ENCODE measurements at regions of chr12 and their contacts with region 1.

Region 1: DNA sequence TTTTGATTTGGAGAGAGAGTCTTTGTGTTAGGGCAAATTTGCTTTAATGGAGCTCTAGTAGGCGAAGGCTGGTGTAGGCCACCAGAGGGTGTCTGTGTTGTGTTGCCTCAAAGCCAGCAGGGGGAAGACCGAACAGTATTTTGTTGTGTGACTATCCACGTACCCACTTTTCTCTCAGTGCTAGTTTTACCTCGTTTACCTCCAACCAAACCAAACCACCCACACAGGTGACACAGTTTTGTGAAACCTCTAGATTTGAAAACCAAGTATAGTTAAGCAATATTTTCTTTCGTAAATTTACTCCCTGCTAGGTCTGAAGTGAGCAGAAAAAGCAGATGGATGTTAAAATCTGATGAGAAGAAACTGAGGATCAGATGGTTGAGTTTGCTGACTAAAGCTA is 36.3 kb upstream of the NPFF start:
- DNase-seq: peak; percentile 18 to 63
- ATAC-seq: peak; percentile 78 to 93 (median 92)
- H3K4me3 ChIP-seq: no peak overlapping the region
- H3K27ac ChIP-seq: peak overlapping the region in 7 of 10 donors; percentile 2 to 64 (median 49)
- H3K4me1 ChIP-seq: peaks cover 0 to 23% (median 16%) of the 10 kb centered on the region in 9 donors
- H3K27me3 ChIP-seq: no peaks in the 10 kb centered on the region
- CTCF ChIP-seq: peak; percentile 69 to 94 (median 84)

Region 2: GRCh38 chr12:53596920-53597363 is 53.4 kb after region 1 on chr12:
- intact Hi-C with region 1: loop called in 3 of 10 experiments (anchors 10 kb)
- DNase-seq: no peak
- ATAC-seq: peak; percentile 76 to 94 (median 89)
- H3K4me3 ChIP-seq: peak overlapping the region in 1 of 10 donors; percentile 5
- H3K27ac ChIP-seq: peak overlapping the region; percentile 19 to 81 (median 72)
- H3K4me1 ChIP-seq: peaks cover 14 to 90% (median 71%) of the 10 kb centered on the region in 9 donors
- H3K27me3 ChIP-seq: no peaks in the 10 kb centered on the region
- CTCF ChIP-seq: no peak

Region 3: DNA sequence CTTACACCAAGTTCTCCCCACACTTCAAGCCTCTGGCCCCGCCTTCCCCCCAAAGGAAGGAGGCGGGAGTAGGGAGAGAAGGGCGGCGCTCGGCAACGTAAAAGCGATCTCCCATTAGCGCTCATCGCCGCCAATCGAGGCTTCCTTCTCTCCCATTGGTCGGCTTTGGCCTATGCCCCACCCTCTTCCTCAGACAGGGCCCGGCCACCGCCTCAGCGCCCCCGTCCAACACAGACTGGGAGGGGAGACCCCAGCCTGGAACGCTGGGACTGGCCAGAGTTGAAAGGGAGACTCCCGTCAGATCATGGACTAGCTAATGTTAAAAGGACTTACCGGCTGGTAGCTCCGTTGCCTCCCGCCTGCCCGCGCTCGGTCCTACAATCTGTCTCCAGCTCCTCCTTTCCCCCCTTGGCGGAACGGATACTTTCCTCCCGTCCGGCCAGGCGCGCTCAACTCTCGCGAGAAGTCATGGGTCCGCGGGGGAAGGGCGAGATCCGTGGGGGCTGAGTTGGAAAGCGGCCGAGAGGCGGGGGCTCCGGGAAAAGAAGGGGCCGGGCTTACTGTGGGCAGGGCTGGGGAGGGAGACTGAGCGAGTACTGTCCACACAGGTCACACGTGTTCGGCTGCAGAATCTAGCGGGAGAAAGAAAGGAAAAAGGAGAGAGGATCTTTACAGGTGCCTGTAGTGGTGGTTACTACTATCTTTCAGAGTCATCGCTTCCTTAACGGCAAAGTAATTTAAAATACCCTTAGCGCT is 82.6 kb after region 1 on chr12 and contains the start of gene ATF7:
- intact Hi-C with region 1: loop called in 5 of 10 experiments (anchors 2 to 10 kb)
- DNase-seq: peak; percentile 98 to 99
- ATAC-seq: peak; percentile 97 to 99 (median 98)
- H3K4me3 ChIP-seq: peak within 1 kb of the TSS; percentile 57 to 74 (median 69)
- H3K27ac ChIP-seq: peak within 1 kb of the TSS; percentile 79 to 98 (median 96)
- H3K4me1 ChIP-seq: peaks cover 5 to 42% (median 36%) of the 10 kb centered on the region in 9 donors
- H3K27me3 ChIP-seq: no peaks in the 10 kb centered on the region
- CTCF ChIP-seq: peak in 2 of 9 donors; percentile 7 to 14
- total RNA-seq, gene ATF7: 28.2 to 47.8 (median 34.4) TPM

Region 4: DNA sequence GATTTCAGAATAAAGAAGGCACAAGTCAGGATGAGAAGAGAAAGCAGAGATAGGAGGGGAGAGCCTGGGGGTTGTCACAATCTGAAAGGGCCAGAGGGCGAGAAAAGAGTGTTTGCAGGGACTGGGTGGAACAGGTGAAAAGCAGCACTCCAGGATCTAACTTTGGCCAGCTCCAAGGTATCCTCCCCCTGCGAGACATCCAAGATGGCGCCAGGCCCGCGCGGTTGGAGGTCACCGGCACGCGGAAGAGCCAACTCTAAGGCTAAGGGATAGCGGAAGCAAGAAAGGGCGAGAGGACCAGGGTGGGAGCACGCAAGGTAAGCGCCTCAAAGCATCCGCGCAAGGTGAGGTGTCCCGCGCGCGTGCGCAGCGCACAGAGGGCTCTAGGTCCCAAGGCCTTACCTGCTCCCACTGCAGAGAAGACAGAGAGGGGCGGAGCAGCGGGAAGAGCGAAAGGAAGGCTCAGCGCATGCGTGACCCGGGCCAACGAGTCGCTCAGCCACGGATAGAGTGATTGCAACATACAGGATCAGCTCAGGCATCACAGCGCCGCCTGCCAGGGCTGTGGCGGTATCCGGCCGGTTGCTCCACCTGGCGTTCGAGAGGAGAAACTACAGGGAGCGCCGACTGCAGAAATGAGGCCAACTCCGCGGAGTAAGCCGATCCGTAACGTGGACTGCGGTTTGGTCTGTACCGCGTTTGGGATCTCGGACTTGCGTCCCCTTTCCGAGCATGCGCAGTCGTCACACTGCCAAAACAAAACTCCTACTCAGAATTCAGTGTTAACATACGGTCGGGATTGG is 132.3 kb after region 1 on chr12 and contains the start of gene ATP5MC2:
- intact Hi-C with region 1: loop called in 9 of 10 experiments (anchors 1 to 5 kb)
- DNase-seq: peak; percentile 96 to 97
- ATAC-seq: peak; percentile 95 to 98 (median 97)
- H3K4me3 ChIP-seq: peak within 1 kb of the TSS; percentile 48 to 98 (median 72)
- H3K27ac ChIP-seq: peak within 1 kb of the TSS; percentile 87 to 98 (median 90)
- H3K4me1 ChIP-seq: peaks cover 3 to 51% (median 34%) of the 10 kb centered on the region in 9 donors
- H3K27me3 ChIP-seq: peaks cover 0 to 12% (median 0%) of the 10 kb centered on the region in 7 donors
- CTCF ChIP-seq: peak; percentile 96 to 100 (median 99)
- total RNA-seq, gene ATP5MC2: 499 to 627 (median 546) TPM

Region 5: DNA sequence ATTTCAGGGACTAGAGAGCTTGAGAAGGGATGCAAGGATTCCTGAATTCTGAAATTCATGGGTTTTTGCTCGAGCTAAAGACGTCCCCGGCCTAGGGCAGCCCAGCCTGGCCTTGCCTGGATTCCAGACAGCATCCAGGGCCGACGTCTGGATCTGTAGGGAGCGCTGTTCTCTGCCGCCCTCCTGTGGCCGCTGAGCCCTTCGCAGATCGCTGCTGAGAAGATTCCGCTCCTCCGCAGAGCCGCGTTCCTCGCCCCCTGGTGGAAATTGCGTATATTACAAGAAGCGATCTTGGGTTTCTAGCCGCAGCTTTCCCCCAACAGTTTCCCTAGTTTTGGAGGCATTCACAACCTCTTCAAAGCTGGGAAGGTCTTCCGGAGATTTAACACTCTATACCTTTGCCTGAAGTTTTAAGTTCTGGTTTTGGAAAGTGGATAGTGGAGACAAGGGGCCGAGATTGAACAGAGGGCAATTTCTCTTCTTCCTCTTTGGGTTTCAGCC is 203.1 kb after region 1 on chr12:
- intact Hi-C with region 1: loop called in 7 of 10 experiments (anchors 2 to 10 kb)
- DNase-seq: peak; percentile 93
- ATAC-seq: peak; percentile 83 to 94 (median 92)
- H3K4me3 ChIP-seq: no peak overlapping the region
- H3K27ac ChIP-seq: no peak overlapping the region
- H3K4me1 ChIP-seq: peaks cover 0 to 29% (median 9%) of the 10 kb centered on the region in 9 donors
- H3K27me3 ChIP-seq: peaks cover 4 to 87% (median 65%) of the 10 kb centered on the region in 7 donors
- CTCF ChIP-seq: peak; percentile 100

Measured in heart right ventricle (tissue), 16 donors.